CD4-positive, alpha-beta T cell (primary cell): ENCODE measurements at regions of chr6 and their contacts with region 1.

Region 1: GRCh38 chr6:161228921-161229591 is 44.8 kb downstream of the AGPAT4 start:
- DNase-seq: peak in 2 of 14 experiments; percentile 20 to 34
- ATAC-seq: no peak
- H3K4me3 ChIP-seq: no peak overlapping the region
- H3K4me3 Mint-ChIP-seq: no peak overlapping the region
- H3K27ac ChIP-seq: no peak overlapping the region
- H3K27ac Mint-ChIP-seq: peak overlapping the region; percentile 61
- H3K4me1 ChIP-seq: peaks cover 38% of the 10 kb centered on the region
- H3K4me1 Mint-ChIP-seq: peaks cover 41% of the 10 kb centered on the region
- H3K27me3 ChIP-seq: no peaks in the 10 kb centered on the region
- H3K27me3 Mint-ChIP-seq: no peaks in the 10 kb centered on the region
- CTCF ChIP-seq: no peak

Region 2: GRCh38 chr6:161117308-161117707 is 111.7 kb before region 1 on chr6:
- CTCF ChIA-PET with region 1: no interaction called
- POLR2A ChIA-PET with region 1: no interaction called
- intact Hi-C with region 1: loop called in 1 of 2 experiments (anchors 5 kb)
- DNase-seq: peak in 3 of 14 experiments; percentile 21 to 67 (median 57)
- ATAC-seq: no peak
- H3K4me3 ChIP-seq: no peak overlapping the region
- H3K4me3 Mint-ChIP-seq: no peak overlapping the region
- H3K27ac ChIP-seq: no peak overlapping the region
- H3K27ac Mint-ChIP-seq: peak overlapping the region; percentile 43
- H3K4me1 ChIP-seq: no peaks in the 10 kb centered on the region
- H3K4me1 Mint-ChIP-seq: peaks cover 11% of the 10 kb centered on the region
- H3K27me3 ChIP-seq: no peaks in the 10 kb centered on the region
- H3K27me3 Mint-ChIP-seq: no peaks in the 10 kb centered on the region
- CTCF ChIP-seq: no peak